AG04449 (cell line): ENCODE measurements at regions of chr14 and their contacts with region 1.

Region 1: GRCh38 chr14:60184146-60184904 is 19.1 kb upstream of the DHRS7 start:
- DNase-seq: no peak
- H3K4me3 ChIP-seq: peak overlapping the region; percentile 44
- CTCF ChIP-seq: peak; percentile 46

Region 2: DNA sequence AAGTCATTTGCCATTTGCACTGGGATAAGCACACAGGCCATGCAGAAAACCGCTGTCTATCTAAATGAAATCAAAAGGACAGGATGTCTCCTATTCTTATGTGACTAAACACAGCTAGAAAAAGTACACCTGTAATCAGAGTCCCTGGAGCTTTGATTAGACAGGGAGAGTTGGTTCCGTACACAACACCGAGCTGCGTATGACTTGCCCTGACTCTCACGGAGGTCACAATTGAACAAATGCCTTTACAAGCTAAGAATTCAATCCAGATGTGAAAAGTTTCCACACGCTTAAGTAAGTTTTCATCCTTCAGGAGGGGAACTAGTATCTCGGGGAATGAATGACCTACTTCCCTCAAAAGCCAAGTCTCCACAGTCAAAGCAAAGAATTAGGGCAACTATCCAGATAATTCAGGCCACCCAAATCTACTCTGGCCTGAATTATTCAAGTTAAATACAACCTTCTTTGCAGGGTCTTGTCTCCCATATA is 381.2 kb before region 1 on chr14:
- CTCF ChIA-PET with region 1: no interaction called
- POLR2A ChIA-PET with region 1: no interaction called
- DNase-seq: no peak
- H3K4me3 ChIP-seq: no peak overlapping the region
- CTCF ChIP-seq: no peak

Region 3: DNA sequence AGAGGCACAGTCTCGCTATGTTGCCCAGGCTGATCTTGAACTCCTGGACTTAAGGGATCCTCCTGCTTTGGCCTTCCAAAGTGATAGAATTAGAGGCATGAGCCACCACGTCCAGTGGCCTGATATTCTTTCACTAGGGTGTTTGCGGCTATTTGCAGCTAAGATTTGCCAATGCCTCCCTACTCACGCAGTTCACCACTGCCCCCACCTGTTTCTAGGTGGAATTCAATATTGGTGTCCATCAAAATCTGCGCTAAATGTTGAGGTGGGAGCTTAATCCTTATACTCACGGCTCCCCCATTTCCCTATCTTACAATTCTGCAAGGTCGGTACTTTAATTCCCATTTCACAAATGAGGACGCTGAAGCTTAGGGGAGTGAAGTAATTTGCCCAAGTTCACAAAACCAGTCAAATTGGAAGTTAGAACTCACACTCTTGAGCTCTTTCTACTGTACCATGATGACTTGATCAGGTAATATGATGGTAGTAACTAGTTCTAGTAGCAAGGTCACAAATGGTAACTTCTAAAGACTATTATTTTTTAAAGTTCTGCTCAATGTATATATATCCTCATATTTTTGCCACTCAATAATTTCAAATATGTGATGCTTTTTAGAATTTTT is 286.5 kb before region 1 on chr14:
- CTCF ChIA-PET with region 1: no interaction called
- POLR2A ChIA-PET with region 1: no interaction called
- DNase-seq: no peak
- H3K4me3 ChIP-seq: no peak overlapping the region
- CTCF ChIP-seq: no peak

Region 4: DNA sequence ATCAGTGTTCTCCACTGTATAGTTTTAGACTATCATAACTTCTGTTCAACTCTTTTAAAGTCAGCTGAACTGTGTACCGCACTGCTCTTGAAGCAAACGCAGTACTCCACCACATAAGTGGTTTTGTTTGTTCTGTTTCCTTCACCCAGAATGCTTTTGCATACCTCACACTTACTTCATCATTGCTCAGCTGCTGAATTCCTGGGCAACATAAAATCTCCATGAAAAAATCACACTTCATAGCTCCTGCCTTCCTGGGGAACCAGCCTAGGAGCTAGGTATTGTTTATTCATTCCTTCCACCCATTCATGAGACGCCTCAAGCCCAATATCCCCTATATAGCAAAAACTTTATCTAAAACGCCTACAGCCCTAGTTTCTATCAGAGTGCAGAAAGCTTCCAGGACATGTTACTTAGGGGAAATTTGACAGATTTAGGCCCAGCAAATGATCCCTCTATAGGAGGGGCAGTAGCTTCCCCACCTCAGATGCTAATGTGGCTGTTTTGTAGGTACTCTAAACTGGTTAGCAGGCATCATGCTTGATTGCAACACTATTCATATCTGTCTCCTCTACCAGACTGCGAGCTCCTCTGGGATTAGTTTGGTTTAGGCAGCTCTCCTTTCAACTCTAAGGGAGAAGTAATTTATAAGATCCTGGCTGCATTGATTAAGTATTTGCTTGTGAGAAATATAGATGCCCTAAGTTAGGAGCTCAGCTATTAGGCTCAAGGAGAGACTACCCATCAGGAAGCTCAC is 219.9 kb before region 1 on chr14:
- CTCF ChIA-PET with region 1: interaction called, 295 read pairs
- POLR2A ChIA-PET with region 1: no interaction called
- DNase-seq: no peak
- H3K4me3 ChIP-seq: no peak overlapping the region
- CTCF ChIP-seq: no peak

Region 5: DNA sequence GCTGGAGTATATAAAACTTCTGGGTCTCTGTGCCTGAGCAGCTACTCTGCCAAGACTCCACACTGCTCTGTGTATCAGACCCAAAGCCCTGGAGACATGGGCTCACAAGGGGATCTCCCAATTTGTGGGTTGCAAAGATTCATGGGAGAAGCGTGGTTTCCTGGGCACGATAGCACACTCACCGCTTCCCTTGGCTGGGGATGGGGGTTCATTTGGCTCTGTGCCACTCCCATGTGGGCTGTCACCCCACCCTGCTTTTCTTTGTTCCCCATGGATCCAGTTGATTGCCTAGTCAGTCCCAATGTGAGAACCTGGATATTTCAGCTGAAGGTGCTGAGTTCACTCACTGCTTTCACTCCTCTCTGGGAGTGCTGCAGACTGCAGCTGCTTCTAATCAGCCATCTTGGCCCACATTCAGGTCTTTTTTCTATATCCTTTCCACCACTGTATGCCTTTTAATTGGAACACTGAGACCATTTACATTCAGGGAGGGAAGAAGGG is 132.6 kb before region 1 on chr14:
- CTCF ChIA-PET with region 1: interaction called, 10 read pairs
- POLR2A ChIA-PET with region 1: no interaction called
- DNase-seq: no peak
- H3K4me3 ChIP-seq: no peak overlapping the region
- CTCF ChIP-seq: no peak

Region 6: GRCh38 chr14:60064491-60065072 is 119.7 kb before region 1 on chr14:
- CTCF ChIA-PET with region 1: interaction called, 198 read pairs
- POLR2A ChIA-PET with region 1: no interaction called
- DNase-seq: no peak
- H3K4me3 ChIP-seq: no peak overlapping the region
- CTCF ChIP-seq: peak; percentile 30

Region 7: DNA sequence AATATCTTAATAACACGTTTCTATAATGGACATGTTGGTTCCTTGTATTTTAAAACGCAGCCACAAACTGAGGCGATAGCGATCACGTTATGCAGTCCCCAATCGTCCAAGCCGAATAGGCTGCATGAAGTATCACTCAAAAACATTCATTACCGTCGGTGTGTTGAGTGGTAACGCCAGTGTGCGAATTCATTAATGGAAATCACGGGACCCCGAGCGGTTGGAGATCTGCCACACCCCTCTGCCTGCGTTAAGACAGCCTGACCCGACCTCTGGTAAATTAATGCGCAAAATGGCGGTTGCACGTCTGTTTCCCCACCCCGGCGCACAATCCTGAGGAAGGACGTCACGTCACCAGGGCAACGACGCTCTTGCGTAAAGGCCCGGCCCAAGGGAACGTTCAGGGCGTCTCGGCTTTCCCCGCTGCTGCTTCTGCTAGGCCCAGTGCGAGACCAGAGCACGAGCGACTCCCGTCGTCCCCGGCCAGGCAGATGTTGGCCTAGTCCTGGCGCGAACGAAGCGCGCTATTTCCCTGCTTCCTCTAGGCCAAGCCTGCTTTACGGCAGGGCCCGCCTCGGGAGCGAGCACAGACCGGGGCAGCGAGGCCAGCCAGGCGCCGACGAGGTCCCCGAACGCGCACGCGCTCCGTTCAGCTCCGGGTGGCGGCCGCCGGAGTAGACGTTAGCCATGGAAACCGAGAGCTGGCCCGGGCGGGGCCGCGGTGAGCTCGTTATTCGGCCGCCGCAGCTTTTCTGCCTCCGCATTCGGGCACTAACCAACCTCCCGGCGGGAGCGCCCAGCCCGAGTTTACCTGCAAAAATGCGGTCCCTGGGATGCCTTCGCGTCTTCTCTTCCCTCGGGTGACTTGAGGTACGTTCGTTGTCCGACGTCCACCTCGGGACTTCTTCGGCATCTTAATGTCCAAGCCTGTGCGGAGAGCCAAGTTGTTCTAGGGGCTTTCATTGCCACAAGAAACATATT is 92.5 kb before region 1 on chr14 and contains the start of gene PCNX4:
- CTCF ChIA-PET with region 1: interaction called, 11 read pairs
- POLR2A ChIA-PET with region 1: no interaction called
- DNase-seq: peak; percentile 90
- H3K4me3 ChIP-seq: peak within 1 kb of the TSS; percentile 92
- CTCF ChIP-seq: no peak

Region 8: DNA sequence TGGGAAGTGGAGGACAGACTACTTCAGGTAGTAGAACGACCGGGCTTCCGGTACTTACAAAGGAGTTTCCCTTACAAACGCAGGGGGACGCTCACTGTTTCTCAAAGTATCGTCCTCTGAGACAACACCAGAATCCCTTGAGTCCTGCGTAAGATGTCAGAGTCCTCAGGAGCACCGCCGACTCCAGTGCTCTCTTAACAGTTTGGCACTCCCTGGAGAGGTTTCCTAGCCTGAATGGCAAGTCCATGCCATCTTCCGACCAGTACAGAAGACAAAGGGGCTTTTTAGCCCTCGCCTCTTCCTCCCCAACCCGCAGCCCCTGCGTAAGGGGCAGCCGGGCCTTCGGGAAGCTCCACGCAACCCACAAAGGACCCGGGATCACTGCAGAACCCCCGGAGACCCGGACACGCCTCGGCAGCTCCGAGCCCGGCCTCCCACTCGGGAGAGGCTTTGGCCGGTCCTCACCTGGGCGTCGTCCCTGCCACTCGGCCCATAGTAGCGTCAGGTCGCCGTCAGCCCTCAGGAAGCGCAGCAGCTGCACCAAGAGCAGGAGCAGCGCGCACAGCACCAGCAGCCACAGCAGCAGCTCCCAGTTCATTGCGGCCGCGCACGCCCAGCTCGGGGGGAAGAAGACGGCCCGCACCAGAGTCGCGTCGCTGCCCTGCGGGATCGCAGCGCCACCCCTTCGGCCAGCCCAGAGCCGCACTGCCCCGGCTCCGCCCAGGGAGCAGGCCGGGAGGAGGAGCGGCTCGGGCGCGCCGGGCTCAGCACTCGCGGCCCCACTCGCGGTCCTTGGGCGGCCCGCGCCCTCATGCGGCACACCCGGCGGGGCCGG is 19.4 kb before region 1 on chr14 and contains the start of gene DHRS7:
- CTCF ChIA-PET with region 1: interaction called, 15 read pairs
- POLR2A ChIA-PET with region 1: no interaction called
- DNase-seq: no peak
- H3K4me3 ChIP-seq: peak within 1 kb of the TSS; percentile 91
- CTCF ChIP-seq: peak; percentile 7

Region 9: GRCh38 chr14:60195179-60195810 is 11.0 kb after region 1 on chr14:
- CTCF ChIA-PET with region 1: interaction called, 18 read pairs
- POLR2A ChIA-PET with region 1: no interaction called
- DNase-seq: no peak
- H3K4me3 ChIP-seq: no peak overlapping the region
- CTCF ChIP-seq: no peak

Region 10: DNA sequence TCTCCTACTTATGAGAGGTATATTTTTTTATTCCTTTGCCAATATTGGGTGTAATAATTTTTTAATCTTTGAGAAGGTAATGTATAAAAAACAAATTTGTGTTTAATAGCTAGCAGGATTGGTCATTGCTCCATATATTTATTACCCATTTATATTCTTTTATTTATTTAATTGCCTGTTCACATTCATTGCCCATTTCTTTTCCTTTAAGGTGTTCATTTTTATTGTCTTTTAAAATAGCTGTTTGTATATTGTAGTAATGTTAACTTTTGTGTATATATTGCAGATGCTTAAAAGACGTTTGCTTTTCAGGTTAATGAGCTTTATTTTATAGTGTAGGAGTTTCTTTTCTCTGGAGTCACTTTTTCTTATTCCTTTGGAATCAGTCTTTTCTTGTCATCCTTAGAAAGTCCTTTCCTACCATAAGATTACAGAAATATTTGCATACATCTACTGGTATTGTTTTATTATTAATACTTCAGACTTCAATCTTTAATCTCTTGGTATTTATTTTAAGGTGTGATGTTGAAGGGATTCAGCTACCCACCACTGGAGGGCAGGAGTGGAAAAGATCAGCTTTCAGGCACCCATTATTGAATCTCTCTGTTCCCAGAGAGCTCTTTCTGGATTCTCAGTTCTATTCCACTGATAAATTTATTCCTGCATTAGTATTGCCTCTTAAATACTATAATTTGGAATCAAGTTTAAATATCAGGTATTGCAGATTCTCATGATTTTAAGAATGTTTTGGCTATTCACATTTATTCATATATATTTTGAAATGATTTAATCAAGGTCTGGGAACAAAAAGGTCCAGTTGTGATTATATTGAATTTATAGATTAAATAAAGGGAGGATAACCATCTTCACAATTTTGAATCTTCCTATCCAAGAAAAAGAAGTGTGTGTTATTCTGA is 82.0 kb after region 1 on chr14:
- CTCF ChIA-PET with region 1: no interaction called
- POLR2A ChIA-PET with region 1: no interaction called
- DNase-seq: no peak
- H3K4me3 ChIP-seq: no peak overlapping the region
- CTCF ChIP-seq: no peak